GM12878 (cell line): ENCODE measurements at regions of chr2 and their contacts with region 1.

Region 1: DNA sequence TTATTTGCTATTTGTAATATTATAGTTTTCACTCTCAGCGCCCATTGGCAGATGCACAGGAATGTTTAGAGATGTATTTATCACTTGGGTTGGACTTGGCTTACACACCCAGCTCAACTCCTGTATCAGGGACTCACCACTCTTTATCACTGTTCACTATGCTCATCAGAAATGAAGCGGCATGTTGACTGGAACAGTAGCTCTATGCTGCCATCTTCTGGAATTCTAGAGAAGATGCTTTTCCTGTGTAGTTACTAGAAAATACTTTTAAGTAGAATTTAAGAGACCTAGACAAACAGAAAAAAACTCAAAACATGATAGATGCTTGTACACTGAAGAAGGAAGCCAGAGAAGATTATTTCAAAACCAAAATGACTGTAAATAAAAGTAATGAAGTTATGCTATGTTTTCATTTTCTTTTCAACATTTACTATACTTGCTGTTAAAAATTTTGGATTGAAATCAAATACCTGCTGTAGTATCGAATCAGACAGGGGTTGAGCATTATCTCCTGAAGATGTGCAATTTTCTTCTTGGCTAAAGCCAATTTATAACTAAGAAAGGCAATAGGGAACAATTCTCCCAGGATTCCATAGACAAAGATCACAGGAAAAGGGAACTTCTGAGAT is 47.4 kb upstream of the NXPH2 start:
- DNase-seq: peak; percentile 31
- ATAC-seq: peak; percentile 91
- H3K4me3 ChIP-seq: no peak overlapping the region
- H3K27ac ChIP-seq: no peak overlapping the region
- H3K4me1 ChIP-seq: no peaks in the 10 kb centered on the region
- H3K27me3 ChIP-seq: no peaks in the 10 kb centered on the region; a peak in 1 of 4 replicates
- CTCF ChIP-seq: peak; percentile 52 to 76 (median 59)
- EP300 ChIP-seq: no peak
- POLR2A ChIP-seq: no peak
- RAD21 ChIP-seq: peak; percentile 81

Region 2: GRCh38 chr2:137888845-137889244 is 938.7 kb before region 1 on chr2:
- CTCF ChIA-PET with region 1: interaction called, 14 read pairs
- POLR2A ChIA-PET with region 1: no interaction called
- RAD21 ChIA-PET with region 1: interaction called, 4 read pairs
- SMC1A ChIA-PET with region 1: interaction called, 6 read pairs
- in situ Hi-C with region 1: no loop called
- intact Hi-C with region 1: no loop called
- DNase-seq: no peak
- ATAC-seq: no peak
- H3K4me3 ChIP-seq: no peak overlapping the region
- H3K27ac ChIP-seq: no peak overlapping the region
- H3K4me1 ChIP-seq: no peaks in the 10 kb centered on the region
- H3K27me3 ChIP-seq: no peaks in the 10 kb centered on the region; a peak in 2 of 4 replicates
- CTCF ChIP-seq: peak; percentile 10 to 28 (median 22); a peak in 3 of 6 replicates
- EP300 ChIP-seq: no peak
- POLR2A ChIP-seq: no peak
- RAD21 ChIP-seq: 0 out of 2 replicates have a peak, but pooled peaks have one; percentile 8

Region 3: GRCh38 chr2:138090330-138090729 is 737.2 kb before region 1 on chr2:
- CTCF ChIA-PET with region 1: interaction called, 3 read pairs
- POLR2A ChIA-PET with region 1: no interaction called
- RAD21 ChIA-PET with region 1: interaction called, 8 read pairs
- SMC1A ChIA-PET with region 1: interaction called, 4 read pairs
- in situ Hi-C with region 1: no loop called
- intact Hi-C with region 1: loop called (anchors 5 kb)
- DNase-seq: no peak
- ATAC-seq: peak; percentile 98
- H3K4me3 ChIP-seq: no peak overlapping the region
- H3K27ac ChIP-seq: no peak overlapping the region
- H3K4me1 ChIP-seq: no peaks in the 10 kb centered on the region
- H3K27me3 ChIP-seq: no peaks in the 10 kb centered on the region
- CTCF ChIP-seq: peak; percentile 56 to 73 (median 58); a peak in 5 of 6 replicates
- EP300 ChIP-seq: no peak
- POLR2A ChIP-seq: no peak
- RAD21 ChIP-seq: peak; percentile 75

Region 4: GRCh38 chr2:138475277-138475776 is 352.2 kb before region 1 on chr2:
- CTCF ChIA-PET with region 1: interaction called, 4 read pairs
- POLR2A ChIA-PET with region 1: no interaction called
- RAD21 ChIA-PET with region 1: interaction called, 5 read pairs
- SMC1A ChIA-PET with region 1: interaction called, 13 read pairs
- in situ Hi-C with region 1: no loop called
- intact Hi-C with region 1: no loop called
- DNase-seq: peak; percentile 53
- ATAC-seq: peak; percentile 92
- H3K4me3 ChIP-seq: no peak overlapping the region
- H3K27ac ChIP-seq: peak overlapping the region; percentile 61
- H3K4me1 ChIP-seq: peaks cover 21% of the 10 kb centered on the region
- H3K27me3 ChIP-seq: no peaks in the 10 kb centered on the region
- CTCF ChIP-seq: no peak
- EP300 ChIP-seq: no peak
- POLR2A ChIP-seq: no peak
- RAD21 ChIP-seq: no peak

Region 5: DNA sequence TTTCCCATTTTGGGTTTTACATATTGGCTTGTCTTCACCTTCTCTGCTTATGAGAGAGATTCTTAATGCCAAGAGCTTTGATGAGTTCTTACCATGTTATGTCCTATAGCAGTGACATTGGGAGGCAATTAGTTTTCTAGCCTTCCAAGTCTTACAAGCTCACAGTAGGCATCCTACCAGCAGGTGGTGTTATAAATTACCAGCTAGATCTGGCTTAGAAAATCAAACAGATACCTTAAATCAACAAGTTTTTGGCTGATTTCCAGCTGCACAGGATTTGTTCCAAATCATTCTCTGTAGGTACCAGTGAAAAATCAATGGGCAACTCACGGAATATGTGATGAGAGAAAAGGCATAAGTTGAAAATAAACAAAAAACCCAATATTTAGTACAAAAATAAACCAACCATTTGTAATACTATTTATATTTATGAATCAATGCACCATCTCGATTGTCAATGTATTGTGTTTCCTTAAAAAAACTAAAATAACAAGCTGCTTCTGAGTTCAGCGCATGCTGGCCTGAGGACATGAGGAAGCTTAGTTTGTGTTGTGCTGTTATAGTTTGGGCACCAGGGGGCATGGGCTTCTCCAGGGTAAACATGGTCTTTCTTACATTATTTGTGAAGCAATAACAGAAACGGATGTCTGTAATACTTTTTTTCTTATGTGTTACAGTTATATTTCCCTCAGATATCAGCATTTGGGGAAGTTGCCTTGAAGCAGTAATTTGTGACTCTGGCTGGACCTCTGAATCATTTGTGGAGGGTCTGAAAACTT is 13.2 kb before region 1 on chr2:
- CTCF ChIA-PET with region 1: interaction called, 28 read pairs
- POLR2A ChIA-PET with region 1: no interaction called
- RAD21 ChIA-PET with region 1: interaction called, 8 read pairs
- SMC1A ChIA-PET with region 1: interaction called, 11 read pairs
- in situ Hi-C with region 1: no loop called
- intact Hi-C with region 1: no loop called
- DNase-seq: no peak
- ATAC-seq: peak; percentile 79
- H3K4me3 ChIP-seq: no peak overlapping the region
- H3K27ac ChIP-seq: no peak overlapping the region
- H3K4me1 ChIP-seq: no peaks in the 10 kb centered on the region
- H3K27me3 ChIP-seq: no peaks in the 10 kb centered on the region
- CTCF ChIP-seq: peak; percentile 6 to 33 (median 22); a peak in 1 of 6 replicates
- EP300 ChIP-seq: no peak
- POLR2A ChIP-seq: no peak
- RAD21 ChIP-seq: no peak